GM10248 (cell line): ENCODE measurements at regions of chr12 and their contacts with region 1.

Region 1: DNA sequence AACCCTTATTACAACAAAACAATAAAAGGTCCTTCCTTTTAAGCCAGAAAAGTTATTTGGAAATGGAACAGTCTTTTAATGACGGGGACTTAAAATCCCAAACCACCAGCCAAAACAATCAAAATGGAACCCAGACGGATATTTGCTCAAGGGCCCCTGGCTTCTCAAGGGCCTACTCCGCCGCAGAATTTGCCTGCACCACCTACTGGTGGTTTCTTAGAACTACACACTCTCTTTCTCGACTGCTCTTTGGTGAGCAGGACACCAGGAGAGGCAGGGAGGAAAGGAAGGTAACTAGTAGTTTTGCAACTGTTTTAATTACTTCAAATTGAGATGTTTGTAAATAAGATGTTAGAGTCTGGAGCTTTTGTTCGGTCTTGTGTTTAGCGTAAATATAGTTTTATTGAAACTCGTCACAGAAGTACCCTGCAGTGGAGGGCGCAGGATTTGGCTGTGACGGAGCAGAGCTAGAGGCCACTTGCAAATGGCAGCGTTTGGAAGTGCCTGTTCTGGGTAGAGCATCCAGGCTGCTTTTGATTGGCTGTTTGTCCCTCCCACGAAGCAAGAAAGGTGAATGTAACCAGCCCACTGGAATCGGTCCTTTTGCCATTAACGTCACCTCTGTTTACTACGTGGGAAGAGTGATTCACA is 238.5 kb downstream of the CACNA1C start:
- DNase-seq: peak; percentile 77
- CTCF ChIP-seq: peak; percentile 65

Region 2: DNA sequence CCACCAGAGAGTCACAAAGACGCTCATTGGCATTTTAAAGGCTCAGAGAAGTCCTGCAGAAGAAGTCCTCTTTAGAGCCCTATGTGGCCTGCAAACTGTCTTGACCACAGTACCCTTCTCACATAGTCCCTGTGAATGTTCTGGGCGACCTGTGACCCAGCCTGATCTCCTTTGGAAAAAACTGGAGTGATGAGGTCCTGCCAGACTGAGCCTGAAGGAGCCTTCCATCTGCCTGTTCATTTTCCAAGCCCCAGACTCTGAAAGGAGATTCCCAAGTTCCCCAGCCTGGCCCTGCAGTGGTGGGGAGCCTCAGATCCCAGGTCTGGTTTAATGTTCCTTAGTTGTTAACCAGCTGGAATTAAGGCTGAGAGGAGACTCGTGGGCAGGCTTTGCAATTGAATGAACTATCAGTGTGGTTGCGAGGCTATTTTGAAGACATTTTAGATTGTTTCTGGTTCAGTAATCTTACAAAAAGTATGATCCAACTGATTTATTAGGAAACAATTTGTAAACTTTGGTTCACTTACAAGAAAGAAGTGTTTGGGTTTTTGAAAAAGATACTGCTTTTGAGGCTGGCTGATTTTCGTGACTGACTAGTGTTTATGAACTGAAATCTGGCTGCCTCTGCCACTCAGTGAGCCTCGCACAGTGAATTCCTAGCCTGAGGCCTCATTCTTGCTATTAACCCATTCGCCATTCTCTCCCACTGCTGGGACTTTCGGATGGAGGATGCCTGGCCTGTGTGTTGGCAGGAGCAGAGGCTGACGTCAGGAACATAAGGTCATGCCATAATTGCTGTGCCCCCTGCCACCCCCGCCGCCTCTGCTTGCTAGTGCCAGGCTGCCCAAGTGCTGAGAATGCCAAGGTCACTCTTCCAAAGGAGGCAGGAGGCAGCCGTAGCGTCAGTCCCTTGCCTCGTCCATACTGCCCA is 10.5 kb after region 1 on chr12:
- CTCF ChIA-PET with region 1: interaction called, 24 read pairs
- POLR2A ChIA-PET with region 1: no interaction called
- DNase-seq: no peak
- CTCF ChIP-seq: no peak

Region 3: GRCh38 chr12:2501464-2502191 is 210.3 kb after region 1 on chr12:
- CTCF ChIA-PET with region 1: no interaction called
- POLR2A ChIA-PET with region 1: no interaction called
- DNase-seq: no peak
- CTCF ChIP-seq: no peak

Region 4: GRCh38 chr12:3158851-3159465 is 867.7 kb after region 1 on chr12:
- CTCF ChIA-PET with region 1: no interaction called
- POLR2A ChIA-PET with region 1: no interaction called
- DNase-seq: no peak
- CTCF ChIP-seq: no peak